Activated naive CD4-positive, alpha-beta T cell treated with anti-CD3 and anti-CD28 coated beads, Interleukin-2, amount 10 ng/mL, durations not matched to agents 7 days and 5 days (primary cell): ENCODE measurements at regions of chr12 and their contacts with region 1.

Region 1: GRCh38 chr12:75526655-75527511 is 15.5 kb upstream of the KRR1 start:
- DNase-seq: peak; percentile 38
- H3K4me3 Mint-ChIP-seq: no peak overlapping the region
- H3K27ac Mint-ChIP-seq: no peak overlapping the region
- H3K4me1 Mint-ChIP-seq: peaks cover 7% of the 10 kb centered on the region
- H3K27me3 Mint-ChIP-seq: peaks cover 22% of the 10 kb centered on the region

Region 2: DNA sequence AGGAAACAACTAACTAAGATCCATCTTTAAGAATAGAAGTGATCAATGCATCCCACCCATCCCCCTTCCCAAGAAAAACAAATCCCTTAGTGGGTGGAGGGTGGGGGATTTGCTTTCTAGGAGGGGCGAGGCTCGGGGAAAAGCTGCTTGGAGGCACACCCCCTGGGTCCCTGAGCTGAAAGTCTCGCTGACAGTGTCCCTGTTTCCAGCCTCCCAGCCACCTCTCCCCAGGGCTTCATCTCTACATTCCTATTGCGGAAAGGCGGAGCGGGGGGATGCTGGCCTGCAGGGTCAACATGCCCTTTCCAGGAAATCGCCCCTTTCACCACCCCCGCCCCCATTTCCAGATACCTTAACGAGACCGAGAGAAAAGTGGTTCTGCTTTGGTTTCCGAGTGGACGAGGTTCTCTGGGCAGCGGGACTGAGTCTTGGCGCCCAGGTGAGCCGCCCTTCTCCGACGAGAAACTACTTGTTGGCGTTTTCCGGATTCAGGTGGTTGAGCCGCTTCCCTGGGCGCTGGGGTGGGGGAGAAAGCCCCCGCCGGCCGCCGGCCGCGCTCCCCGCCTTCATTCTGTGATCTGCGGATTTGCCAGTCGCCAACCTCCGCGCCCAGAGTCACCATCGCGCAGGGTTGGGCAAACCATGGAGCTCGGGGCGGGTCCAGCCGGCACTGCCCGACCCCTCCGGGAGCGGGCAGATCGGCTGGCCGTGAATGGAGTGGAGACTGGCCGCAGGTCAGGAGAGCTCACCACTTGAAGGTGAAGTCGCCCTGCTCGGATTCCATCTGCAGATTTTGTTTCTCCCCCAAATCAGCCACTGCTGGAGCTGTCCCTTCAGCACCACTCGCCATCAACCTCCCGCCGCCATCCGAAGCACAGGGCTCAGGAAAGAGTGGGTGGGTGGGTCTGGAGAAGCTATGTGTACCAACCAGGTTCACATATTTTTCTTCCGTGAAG is 317.7 kb before region 1 on chr12:
- CTCF ChIA-PET with region 1: no interaction called
- DNase-seq: peak; percentile 43
- H3K4me3 Mint-ChIP-seq: no peak overlapping the region
- H3K27ac Mint-ChIP-seq: no peak overlapping the region
- H3K4me1 Mint-ChIP-seq: peaks cover 3% of the 10 kb centered on the region
- H3K27me3 Mint-ChIP-seq: peaks cover 47% of the 10 kb centered on the region

Region 3: DNA sequence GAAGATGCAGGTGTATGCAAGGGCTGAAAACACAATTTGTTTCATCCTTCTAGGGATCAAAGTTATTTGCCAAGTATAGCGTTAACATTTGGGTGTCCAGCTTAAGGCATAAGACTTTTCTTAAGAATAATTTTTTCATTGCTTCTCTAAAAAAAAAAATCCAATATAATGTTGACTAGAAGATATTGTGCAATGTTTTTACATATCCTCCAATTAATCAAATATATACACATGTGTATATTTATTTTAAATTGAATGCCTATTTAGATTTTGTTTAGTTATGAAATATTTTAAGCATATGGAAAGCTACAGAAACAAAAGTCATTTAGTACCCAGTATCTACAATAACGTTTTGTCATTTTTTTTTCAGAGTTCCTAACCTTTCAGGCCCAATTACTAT is 13.0 kb after region 1 on chr12:
- CTCF ChIA-PET with region 1: no interaction called
- DNase-seq: no peak
- H3K4me3 Mint-ChIP-seq: no peak overlapping the region
- H3K27ac Mint-ChIP-seq: no peak overlapping the region
- H3K4me1 Mint-ChIP-seq: no peaks in the 10 kb centered on the region
- H3K27me3 Mint-ChIP-seq: no peaks in the 10 kb centered on the region

Region 4: DNA sequence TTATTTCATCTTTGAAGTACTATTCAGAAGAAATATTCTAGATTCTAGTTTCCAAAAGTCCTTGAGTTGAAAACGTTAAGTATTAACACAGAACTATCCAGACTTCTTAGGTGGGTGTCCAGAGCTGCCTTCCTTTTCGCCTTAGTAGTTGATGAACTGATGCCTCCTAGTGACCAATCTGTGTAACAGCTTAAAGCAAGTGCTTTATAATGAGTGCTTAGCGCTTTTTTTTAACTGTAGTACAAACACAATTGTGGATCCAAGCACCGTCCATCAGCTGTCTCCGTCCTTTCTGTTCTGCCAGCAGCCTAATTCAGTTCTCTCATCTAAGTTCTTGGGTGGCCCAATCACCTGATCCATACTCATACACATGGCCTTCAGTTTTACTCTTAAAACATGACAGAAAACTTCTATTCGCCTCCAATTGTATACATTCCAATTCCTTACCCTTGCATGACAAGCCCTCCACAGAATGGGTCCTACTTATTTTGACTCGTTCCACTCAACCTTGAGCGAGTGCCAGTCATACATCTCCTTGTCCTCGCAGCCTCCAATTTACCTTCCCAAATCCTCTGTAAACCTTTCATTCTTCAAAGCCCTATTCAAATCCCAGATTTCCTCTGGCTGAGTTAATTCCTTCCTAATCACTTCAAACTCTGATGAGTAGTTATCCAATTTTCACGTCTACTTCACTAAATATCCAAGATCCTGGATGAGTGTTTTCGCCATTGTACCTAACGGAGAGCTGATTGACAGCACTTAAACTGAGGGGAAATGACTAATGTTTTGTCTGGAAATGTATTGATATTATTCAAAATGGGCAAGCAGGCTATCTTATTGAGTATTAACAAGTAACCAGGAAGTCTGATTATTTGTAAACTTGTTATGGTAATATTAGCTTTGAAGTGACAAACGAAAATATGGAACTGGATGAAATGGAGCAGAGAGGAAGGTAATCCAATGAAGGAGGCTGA is 510.5 kb after region 1 on chr12:
- CTCF ChIA-PET with region 1: interaction called, 81 read pairs
- DNase-seq: peak; percentile 24
- H3K4me3 Mint-ChIP-seq: no peak overlapping the region
- H3K27ac Mint-ChIP-seq: no peak overlapping the region
- H3K4me1 Mint-ChIP-seq: peaks cover 10% of the 10 kb centered on the region
- H3K27me3 Mint-ChIP-seq: peaks cover 5% of the 10 kb centered on the region

Region 5: GRCh38 chr12:76348079-76348901 is 821.4 kb after region 1 on chr12 and contains the start of gene BBS10:
- CTCF ChIA-PET with region 1: interaction called, 12 read pairs
- DNase-seq: peak; percentile 92
- H3K4me3 Mint-ChIP-seq: peak within 1 kb of the TSS; percentile 92
- H3K27ac Mint-ChIP-seq: peak within 1 kb of the TSS; percentile 90
- H3K4me1 Mint-ChIP-seq: peaks cover 34% of the 10 kb centered on the region
- H3K27me3 Mint-ChIP-seq: no peaks in the 10 kb centered on the region

Region 6: GRCh38 chr12:76455582-76456345 is 928.9 kb after region 1 on chr12:
- CTCF ChIA-PET with region 1: interaction called, 13 read pairs
- DNase-seq: peak; percentile 27
- H3K4me3 Mint-ChIP-seq: no peak overlapping the region
- H3K27ac Mint-ChIP-seq: no peak overlapping the region
- H3K4me1 Mint-ChIP-seq: peaks cover 4% of the 10 kb centered on the region
- H3K27me3 Mint-ChIP-seq: no peaks in the 10 kb centered on the region